Astrocyte of the cerebellum (primary cell): ENCODE measurements at regions of chr6 and their contacts with region 1.

Region 1: DNA sequence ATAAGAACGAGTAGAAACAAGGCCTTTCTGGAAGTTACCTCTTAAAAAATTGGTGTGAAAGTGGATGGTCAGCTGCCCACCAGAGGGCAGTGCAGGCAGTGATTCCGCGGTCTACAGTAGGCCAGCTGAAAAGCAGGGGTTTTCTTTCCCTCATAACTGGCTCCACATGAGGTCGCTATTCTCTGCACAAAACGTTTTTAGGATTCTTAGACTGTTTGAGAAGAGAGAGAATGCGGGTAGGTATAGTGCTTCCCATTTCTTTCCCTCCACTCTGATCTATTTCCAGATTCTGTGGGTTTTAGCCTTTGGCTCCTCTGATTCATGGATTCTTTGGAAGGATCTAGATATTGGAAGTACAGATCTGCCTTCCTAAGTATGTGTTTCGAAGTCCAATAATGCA is 14.2 kb downstream of the FIG4 start:
- DNase-seq: peak; percentile 86
- H3K4me3 ChIP-seq: no peak overlapping the region
- CTCF ChIP-seq: peak; percentile 94

Region 2: DNA sequence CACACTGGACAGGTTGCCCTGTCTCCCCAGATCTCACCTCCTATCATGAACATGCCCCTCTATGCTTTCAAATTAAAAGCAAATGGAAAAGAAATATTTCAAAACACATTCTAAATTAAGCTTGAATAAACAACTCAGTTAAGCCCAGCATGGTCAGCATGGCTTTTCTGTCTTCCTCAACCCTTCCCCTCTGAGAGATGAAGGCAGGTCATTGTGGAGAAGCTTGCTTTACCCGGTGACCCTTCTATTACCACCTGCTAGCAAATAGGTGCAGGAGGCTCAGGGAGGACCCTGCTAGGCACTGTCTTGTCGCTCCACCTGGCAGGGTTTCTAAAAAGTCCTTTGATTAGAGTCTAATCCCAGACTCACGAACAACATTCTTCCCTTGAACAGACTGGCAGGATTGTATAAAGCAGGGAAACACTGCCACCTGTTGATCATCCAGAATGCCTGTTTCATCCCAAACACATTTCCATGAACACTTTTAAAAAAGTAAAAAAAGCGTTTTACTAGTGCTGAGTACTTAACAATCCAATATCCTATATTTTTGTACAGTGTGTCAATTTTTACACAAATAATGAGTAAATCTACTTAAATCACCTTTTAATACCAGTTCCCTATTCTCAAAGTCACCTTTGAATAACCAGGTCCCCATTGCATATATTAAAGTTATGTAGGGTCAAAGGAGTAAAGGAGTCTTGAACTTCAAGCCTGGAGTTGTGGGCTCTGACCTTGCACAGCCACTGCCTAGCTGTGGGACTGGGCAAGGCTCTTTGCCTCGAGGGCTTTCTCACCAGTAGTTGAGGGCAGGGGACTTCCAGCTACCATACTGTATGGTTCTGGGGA is 348.4 kb after region 1 on chr6:
- in situ Hi-C with region 1: loop called (anchors 25 kb)
- DNase-seq: peak; percentile 41
- H3K4me3 ChIP-seq: no peak overlapping the region
- CTCF ChIP-seq: peak; percentile 80

Region 3: GRCh38 chr6:110398778-110399177 is 693.5 kb after region 1 on chr6:
- in situ Hi-C with region 1: loop called (anchors 25 kb)
- DNase-seq: no peak
- H3K4me3 ChIP-seq: no peak overlapping the region
- CTCF ChIP-seq: no peak